ENCODE measurements at regions of chr14 and their contacts with region 1.

Region 1: DNA sequence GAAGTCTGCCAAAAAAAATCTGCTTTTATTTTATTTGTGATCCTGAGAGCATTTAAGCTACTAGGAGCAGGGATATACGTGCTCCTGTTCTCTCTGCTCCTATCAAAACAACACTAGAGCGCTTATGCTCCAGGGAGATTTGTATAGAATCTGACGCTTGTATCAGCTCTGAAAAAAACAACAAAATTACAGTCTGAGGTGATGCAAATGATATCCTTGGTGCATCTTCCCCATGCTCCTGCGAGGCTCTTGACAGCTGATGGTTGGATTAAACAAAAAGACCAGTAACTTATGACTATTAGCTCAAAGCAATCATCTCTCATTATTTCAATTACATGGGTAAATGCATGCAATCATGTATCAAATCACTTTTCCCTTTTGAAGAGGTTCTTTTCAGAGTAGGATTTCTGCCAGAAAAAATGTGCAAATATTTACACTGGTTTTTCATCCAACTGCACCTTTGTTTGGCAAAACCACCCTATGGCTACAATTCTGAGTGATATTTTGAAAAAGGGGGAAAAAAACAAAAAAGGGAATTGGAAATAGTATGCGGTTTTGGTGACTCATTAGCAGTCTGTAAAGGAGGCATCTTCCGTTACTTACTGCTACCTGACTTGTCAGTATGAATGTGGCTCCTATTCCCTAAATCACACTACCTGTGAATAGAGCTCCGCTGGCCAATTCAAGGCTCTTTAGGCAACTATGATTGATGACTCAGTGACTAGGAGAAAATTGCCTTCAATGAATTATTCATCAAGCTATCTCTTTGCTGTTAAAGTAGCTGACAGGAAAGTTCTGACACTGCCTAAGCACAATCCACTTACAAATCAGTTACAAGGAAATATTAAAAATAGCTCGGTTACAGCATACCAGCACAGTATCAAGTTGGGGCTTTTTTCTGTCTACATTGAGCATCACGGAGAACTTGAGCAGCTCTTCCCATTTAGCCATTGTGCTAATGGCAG is 450.0 kb downstream of the FOXG1 start:
- DNase-seq: no peak
- ATAC-seq: no peak
- H3K4me3 ChIP-seq: no peak overlapping the region
- H3K27ac ChIP-seq: no peak overlapping the region
- H3K4me1 ChIP-seq: no peaks in the 10 kb centered on the region
- H3K27me3 ChIP-seq: no peaks in the 10 kb centered on the region
- CTCF ChIP-seq: no peak
- POLR2A ChIP-seq: no peak
- RAD21 ChIP-seq: no peak

Region 2: GRCh38 chr14:29463727-29464395 is 247.3 kb after region 1 on chr14:
- CTCF ChIA-PET with region 1: no interaction called
- POLR2A ChIA-PET with region 1: no interaction called
- dilution Hi-C with region 1: no loop called
- in situ Hi-C with region 1: no loop called
- intact Hi-C with region 1: loop called (anchors 5 kb)
- DNase-seq: no peak
- ATAC-seq: no peak
- H3K4me3 ChIP-seq: no peak overlapping the region
- H3K27ac ChIP-seq: no peak overlapping the region
- H3K4me1 ChIP-seq: peaks cover 3% of the 10 kb centered on the region; the same call in 1 of the 2 replicates
- H3K27me3 ChIP-seq: no peaks in the 10 kb centered on the region
- CTCF ChIP-seq: no peak
- POLR2A ChIP-seq: no peak
- RAD21 ChIP-seq: peak; percentile 20; the same call in 1 of the 2 replicates